ENCODE measurements at regions of chr6 and their contacts with region 1.

Region 1: DNA sequence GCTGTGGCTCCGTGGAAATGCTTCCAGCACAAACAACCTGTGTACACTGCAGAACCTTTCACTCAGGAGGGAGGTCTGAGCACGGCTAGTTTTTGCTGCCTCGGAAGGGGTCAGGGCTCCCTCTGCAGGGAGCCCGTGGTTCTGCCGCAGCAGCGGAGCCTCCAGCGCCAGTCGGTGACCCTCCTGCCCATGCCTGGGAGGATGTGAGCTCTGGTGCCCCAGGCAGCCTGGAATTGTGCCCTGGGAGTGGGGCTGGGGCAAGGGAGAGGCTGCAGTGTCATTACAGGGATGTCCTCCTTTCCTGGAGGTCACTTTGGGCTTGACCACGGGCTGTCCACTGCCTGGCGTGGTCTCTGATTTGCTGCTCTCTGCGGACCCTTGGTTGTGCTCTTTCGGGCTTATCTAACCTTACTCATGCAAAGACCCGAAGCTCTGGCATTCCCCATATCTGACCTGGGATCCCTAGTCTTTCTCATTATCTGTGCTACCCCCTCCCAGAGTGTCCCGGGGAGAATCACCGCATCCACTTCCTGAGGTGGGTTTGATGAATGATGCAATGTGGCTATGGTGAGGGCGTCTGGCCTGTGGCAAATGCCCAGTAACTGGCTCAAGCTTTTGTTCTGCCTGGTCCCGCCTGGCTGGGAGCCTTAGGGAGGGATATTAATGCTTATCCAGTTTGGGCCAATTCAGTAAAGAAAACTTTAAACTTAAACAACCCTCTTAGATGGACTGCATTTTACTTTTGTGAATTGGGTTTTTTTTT is 59.6 kb upstream of the TAGAP start:
- DNase-seq: peak; percentile 72 to 92
- ATAC-seq: peak; percentile 68 to 81 (median 68)
- H3K4me3 ChIP-seq: no peak overlapping the region
- H3K4me3 Mint-ChIP-seq: peak overlapping the region; percentile 67
- H3K27ac ChIP-seq: peak overlapping the region; percentile 71
- H3K27ac Mint-ChIP-seq: peak overlapping the region; percentile 83 to 95
- H3K4me1 ChIP-seq: peaks cover 61% of the 10 kb centered on the region
- H3K4me1 Mint-ChIP-seq: peaks cover 56 to 62% of the 10 kb centered on the region in 2 donors
- H3K27me3 ChIP-seq: no peaks in the 10 kb centered on the region
- H3K27me3 Mint-ChIP-seq: no peaks in the 10 kb centered on the region
- CTCF ChIP-seq: peak; percentile 94

Region 2: DNA sequence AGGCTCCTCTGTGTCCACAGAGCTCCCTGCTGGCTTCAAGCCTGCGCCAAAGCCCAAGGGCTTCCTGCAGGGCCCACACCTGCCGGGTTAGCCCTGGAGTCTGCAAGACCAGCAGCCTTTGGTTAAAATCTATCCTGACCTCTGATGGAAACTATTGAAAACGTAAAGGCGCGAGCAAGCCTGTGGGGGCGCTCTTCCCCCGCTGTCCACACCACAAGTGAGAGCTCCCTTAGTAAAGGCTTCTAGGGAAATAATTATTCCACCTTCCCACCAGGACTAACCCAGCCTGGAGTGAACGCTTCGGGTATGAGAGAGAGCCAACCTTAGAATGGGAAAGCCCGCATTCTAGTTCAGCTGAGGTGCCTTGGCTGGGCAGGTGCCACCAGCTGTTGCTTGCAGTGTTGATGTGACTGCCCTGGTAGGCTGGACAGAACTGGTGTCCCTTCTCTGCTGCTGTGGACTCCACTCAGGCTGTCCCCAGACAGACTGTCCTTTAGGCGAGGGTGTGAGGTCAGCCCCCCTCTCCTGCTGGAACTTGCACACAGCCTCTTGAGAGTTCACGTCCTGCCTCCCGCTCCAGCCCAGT is 385.8 kb before region 1 on chr6:
- intact Hi-C with region 1: loop called (anchors 2 kb)
- DNase-seq: peak in 1 of 2 donors; percentile 31
- ATAC-seq: no peak
- H3K4me3 ChIP-seq: no peak overlapping the region
- H3K4me3 Mint-ChIP-seq: peak overlapping the region; percentile 86
- H3K27ac ChIP-seq: peak overlapping the region; percentile 95
- H3K27ac Mint-ChIP-seq: peak overlapping the region; percentile 92 to 98
- H3K4me1 ChIP-seq: peaks cover 78% of the 10 kb centered on the region
- H3K4me1 Mint-ChIP-seq: peaks cover 74 to 76% of the 10 kb centered on the region in 2 donors
- H3K27me3 ChIP-seq: no peaks in the 10 kb centered on the region
- H3K27me3 Mint-ChIP-seq: no peaks in the 10 kb centered on the region
- CTCF ChIP-seq: no peak

Region 3: GRCh38 chr6:158835616-158836221 is 268.6 kb before region 1 on chr6:
- intact Hi-C with region 1: no loop called
- DNase-seq: no peak
- ATAC-seq: peak; percentile 62 to 75 (median 67)
- H3K4me3 ChIP-seq: no peak overlapping the region
- H3K4me3 Mint-ChIP-seq: no peak overlapping the region
- H3K27ac ChIP-seq: no peak overlapping the region
- H3K27ac Mint-ChIP-seq: peak overlapping the region in 1 of 2 donors; percentile 52
- H3K4me1 ChIP-seq: no peaks in the 10 kb centered on the region
- H3K4me1 Mint-ChIP-seq: peaks cover 5 to 12% of the 10 kb centered on the region in 2 donors
- H3K27me3 ChIP-seq: no peaks in the 10 kb centered on the region
- H3K27me3 Mint-ChIP-seq: peaks cover 6 to 10% of the 10 kb centered on the region in 2 donors
- CTCF ChIP-seq: no peak

Region 4: DNA sequence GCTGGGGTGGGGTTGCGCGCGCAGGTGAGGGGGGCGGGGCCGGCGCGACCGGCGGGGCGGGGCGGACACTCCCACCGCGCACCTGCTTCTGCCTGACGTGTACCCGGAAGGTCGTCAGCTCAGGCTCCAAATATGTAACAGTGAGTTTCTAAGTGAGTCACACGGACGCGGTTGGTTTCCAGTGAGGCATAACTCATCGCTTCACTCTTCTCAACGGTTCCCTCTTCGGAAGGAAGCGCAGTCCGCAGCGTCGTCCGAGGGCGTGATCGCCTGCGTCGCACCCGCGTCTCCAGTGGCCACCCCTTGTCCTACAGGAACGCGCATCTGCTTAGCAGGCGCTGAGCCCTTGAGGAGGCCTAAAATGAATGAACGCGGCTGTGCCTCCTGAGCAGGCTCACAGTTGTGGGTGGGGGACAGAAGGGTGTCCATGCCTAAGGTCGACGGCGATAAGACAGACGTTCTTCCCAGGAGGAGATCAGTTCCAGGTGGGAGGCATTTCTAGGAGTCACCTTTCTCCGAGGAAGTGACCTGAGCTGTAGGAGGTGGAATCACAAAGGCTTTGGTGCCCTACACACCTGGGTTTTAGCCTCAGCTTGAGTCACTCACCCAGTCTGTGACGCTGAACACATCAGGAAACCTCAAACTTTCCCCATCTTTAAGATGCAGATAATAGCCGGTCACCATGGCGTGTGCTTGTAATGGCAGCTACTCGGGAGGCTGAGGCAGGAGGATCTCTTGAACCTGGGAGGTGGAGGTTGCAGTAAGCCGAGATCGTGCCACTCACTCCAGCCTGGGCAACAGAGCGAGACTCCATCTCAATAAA is 234.3 kb before region 1 on chr6:
- intact Hi-C with region 1: loop called (anchors 5 kb)
- DNase-seq: peak; percentile 83 to 98
- ATAC-seq: peak; percentile 73 to 91 (median 80)
- H3K4me3 ChIP-seq: peak overlapping the region; percentile 47
- H3K4me3 Mint-ChIP-seq: peak overlapping the region; percentile 92
- H3K27ac ChIP-seq: peak overlapping the region; percentile 90
- H3K27ac Mint-ChIP-seq: peak overlapping the region; percentile 98 to 100
- H3K4me1 ChIP-seq: peaks cover 30% of the 10 kb centered on the region
- H3K4me1 Mint-ChIP-seq: peaks cover 34 to 39% of the 10 kb centered on the region in 2 donors
- H3K27me3 ChIP-seq: no peaks in the 10 kb centered on the region
- H3K27me3 Mint-ChIP-seq: peaks cover 2 to 7% of the 10 kb centered on the region in 2 donors
- CTCF ChIP-seq: no peak

Region 5: GRCh38 chr6:159008656-159009288 is 95.6 kb before region 1 on chr6:
- intact Hi-C with region 1: loop called (anchors 1 kb)
- DNase-seq: peak in 1 of 2 donors; percentile 79
- ATAC-seq: peak; percentile 84 to 88 (median 87)
- H3K4me3 ChIP-seq: peak overlapping the region; percentile 18
- H3K4me3 Mint-ChIP-seq: peak overlapping the region; percentile 62
- H3K27ac ChIP-seq: peak overlapping the region; percentile 30
- H3K27ac Mint-ChIP-seq: peak overlapping the region; percentile 76 to 77
- H3K4me1 ChIP-seq: peaks cover 19% of the 10 kb centered on the region
- H3K4me1 Mint-ChIP-seq: peaks cover 10 to 30% of the 10 kb centered on the region in 2 donors
- H3K27me3 ChIP-seq: no peaks in the 10 kb centered on the region
- H3K27me3 Mint-ChIP-seq: no peaks in the 10 kb centered on the region
- CTCF ChIP-seq: peak; percentile 74

Region 6: DNA sequence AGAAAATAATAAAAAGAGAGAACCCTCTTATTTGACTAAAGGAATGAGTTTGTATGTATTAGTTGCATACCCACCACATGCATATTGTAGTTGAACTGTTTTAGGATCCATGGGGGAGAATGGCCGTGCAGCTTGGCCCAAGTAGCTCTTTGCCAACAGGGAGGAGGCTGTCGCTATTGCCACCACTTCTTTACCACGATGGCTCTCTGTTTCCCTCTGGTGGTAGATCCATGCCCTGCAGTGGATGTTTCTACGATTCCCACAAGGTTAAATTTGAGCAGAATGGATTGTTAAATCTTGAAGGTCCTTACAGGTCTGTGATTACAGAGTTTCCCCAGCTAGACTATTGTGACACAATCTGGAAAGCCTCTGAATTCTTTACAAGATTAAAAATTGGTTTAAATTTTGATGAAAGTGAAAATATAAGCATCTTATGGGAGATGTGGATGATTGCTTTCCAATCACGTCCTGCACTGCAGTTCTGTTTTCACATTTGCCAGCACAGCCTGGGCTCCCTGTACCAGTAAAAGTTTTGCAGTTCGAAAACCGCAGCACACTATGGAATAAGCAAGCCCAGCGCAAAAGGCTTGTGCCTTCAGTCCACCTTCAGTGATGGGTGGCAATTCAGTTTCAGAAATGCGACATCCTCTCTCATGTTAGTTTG is 30.5 kb after region 1 on chr6:
- intact Hi-C with region 1: loop called (anchors 2 kb)
- DNase-seq: peak; percentile 68 to 90
- ATAC-seq: peak; percentile 89 to 100 (median 98)
- H3K4me3 ChIP-seq: no peak overlapping the region
- H3K4me3 Mint-ChIP-seq: no peak overlapping the region
- H3K27ac ChIP-seq: no peak overlapping the region
- H3K27ac Mint-ChIP-seq: no peak overlapping the region
- H3K4me1 ChIP-seq: peaks cover 4% of the 10 kb centered on the region
- H3K4me1 Mint-ChIP-seq: peaks cover 6 to 12% of the 10 kb centered on the region in 2 donors
- H3K27me3 ChIP-seq: no peaks in the 10 kb centered on the region
- H3K27me3 Mint-ChIP-seq: peaks cover 7 to 14% of the 10 kb centered on the region in 2 donors
- CTCF ChIP-seq: peak; percentile 99

Region 7: DNA sequence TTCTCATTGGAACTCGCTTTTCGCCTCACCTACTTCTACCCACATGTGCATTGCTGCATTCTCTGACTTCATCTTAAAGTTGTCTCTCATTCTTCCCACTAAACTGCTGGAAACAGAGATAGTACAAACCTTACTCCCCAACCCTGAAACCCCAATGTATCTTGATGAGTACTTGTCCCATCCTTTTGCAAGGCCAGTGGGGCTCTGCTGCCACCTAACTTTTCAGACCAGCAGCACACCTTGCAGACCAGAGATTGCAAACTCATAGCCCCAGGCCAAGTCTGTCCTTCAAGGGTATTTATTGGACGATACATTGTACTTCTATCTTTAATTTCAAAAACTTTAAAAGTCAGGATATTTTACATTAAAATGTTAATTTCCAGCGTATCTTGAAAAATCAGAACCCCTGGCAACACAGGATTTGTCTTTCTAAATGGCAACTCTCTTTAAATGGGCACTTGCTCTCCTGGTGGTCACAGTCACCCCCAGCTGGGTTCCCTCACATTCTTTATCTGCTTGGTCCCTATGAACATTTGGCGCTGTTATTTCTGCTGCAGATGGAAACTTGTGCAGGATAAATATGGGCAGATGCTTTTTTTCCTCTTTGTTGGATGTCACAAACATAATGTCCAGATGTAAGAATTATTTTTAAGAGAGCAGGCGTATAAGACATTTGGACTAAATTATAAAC is 504.8 kb after region 1 on chr6:
- intact Hi-C with region 1: no loop called
- DNase-seq: no peak
- ATAC-seq: no peak
- H3K4me3 ChIP-seq: no peak overlapping the region
- H3K4me3 Mint-ChIP-seq: no peak overlapping the region
- H3K27ac ChIP-seq: no peak overlapping the region
- H3K27ac Mint-ChIP-seq: no peak overlapping the region
- H3K4me1 ChIP-seq: no peaks in the 10 kb centered on the region
- H3K4me1 Mint-ChIP-seq: no peaks in the 10 kb centered on the region
- H3K27me3 ChIP-seq: no peaks in the 10 kb centered on the region
- H3K27me3 Mint-ChIP-seq: peaks cover 0 to 5% of the 10 kb centered on the region in 2 donors
- CTCF ChIP-seq: no peak

Region 8: DNA sequence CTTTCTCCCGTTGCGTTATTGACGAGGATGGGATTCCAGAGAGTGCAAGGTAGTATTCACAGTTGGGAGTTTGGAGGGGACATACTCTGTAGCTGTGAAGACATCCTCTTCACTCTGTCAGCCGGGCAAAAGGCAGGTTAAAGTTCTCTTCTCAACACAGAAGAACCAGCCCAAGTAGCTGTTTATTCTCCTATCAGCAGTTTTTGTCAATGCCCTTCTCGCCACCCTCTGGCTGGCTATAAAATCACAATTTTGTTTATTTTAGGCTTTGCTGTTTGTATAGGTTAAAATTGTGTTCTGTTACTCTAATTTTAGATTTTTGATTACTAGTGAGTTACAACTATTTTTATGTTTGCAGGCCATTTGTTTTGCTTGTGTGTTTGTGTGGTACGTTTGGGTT is 748.5 kb after region 1 on chr6:
- intact Hi-C with region 1: no loop called
- DNase-seq: peak in 1 of 2 donors; percentile 55
- ATAC-seq: peak in 1 of 3 donors; percentile 50
- H3K4me3 ChIP-seq: no peak overlapping the region
- H3K4me3 Mint-ChIP-seq: no peak overlapping the region
- H3K27ac ChIP-seq: no peak overlapping the region
- H3K27ac Mint-ChIP-seq: no peak overlapping the region
- H3K4me1 ChIP-seq: peaks cover 6% of the 10 kb centered on the region
- H3K4me1 Mint-ChIP-seq: no peaks in the 10 kb centered on the region
- H3K27me3 ChIP-seq: no peaks in the 10 kb centered on the region
- H3K27me3 Mint-ChIP-seq: peaks cover 15 to 26% of the 10 kb centered on the region in 2 donors
- CTCF ChIP-seq: no peak